CD4-positive, alpha-beta T cell (primary cell): ENCODE measurements at regions of chr1 and their contacts with region 1.

Region 1: GRCh38 chr1:24253569-24253968 is 65.6 kb upstream of the GRHL3 start:
- DNase-seq: no peak
- ATAC-seq: no peak
- H3K4me3 ChIP-seq: no peak overlapping the region
- H3K4me3 Mint-ChIP-seq: no peak overlapping the region
- H3K27ac ChIP-seq: no peak overlapping the region
- H3K27ac Mint-ChIP-seq: no peak overlapping the region
- H3K4me1 ChIP-seq: no peaks in the 10 kb centered on the region
- H3K4me1 Mint-ChIP-seq: no peaks in the 10 kb centered on the region
- H3K27me3 ChIP-seq: no peaks in the 10 kb centered on the region
- H3K27me3 Mint-ChIP-seq: no peaks in the 10 kb centered on the region
- CTCF ChIP-seq: no peak

Region 2: GRCh38 chr1:24048205-24048869 is 205.2 kb before region 1 on chr1:
- CTCF ChIA-PET with region 1: no interaction called
- POLR2A ChIA-PET with region 1: no interaction called
- intact Hi-C with region 1: no loop called
- DNase-seq: no peak
- ATAC-seq: no peak
- H3K4me3 ChIP-seq: no peak overlapping the region
- H3K4me3 Mint-ChIP-seq: no peak overlapping the region
- H3K27ac ChIP-seq: no peak overlapping the region
- H3K27ac Mint-ChIP-seq: no peak overlapping the region
- H3K4me1 ChIP-seq: no peaks in the 10 kb centered on the region
- H3K4me1 Mint-ChIP-seq: no peaks in the 10 kb centered on the region
- H3K27me3 ChIP-seq: no peaks in the 10 kb centered on the region
- H3K27me3 Mint-ChIP-seq: no peaks in the 10 kb centered on the region
- CTCF ChIP-seq: no peak

Region 3: DNA sequence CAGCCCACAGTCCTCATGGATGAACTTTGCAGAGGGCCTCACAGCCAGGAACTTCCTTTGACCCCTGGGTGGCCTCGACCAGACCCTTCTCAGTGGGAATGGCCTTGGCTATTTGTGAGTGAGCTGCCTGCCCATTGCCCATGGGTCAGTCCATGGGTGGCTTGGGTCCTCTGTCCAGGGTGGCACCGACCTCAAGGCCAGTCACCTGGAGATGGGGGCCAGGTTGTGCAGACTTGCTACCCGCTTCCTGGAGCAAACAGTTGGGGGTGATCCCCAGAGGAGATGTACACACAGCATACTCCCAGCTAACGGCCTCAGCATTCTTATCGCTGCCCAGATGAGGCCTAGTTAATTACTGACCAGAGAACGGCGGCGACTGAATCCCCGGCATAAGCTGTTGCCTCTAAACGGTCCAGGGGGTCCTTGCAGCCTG is 43.4 kb before region 1 on chr1:
- CTCF ChIA-PET with region 1: no interaction called
- POLR2A ChIA-PET with region 1: no interaction called
- intact Hi-C with region 1: loop called in 1 of 2 experiments (anchors 2 kb)
- DNase-seq: no peak
- ATAC-seq: no peak
- H3K4me3 ChIP-seq: no peak overlapping the region
- H3K4me3 Mint-ChIP-seq: no peak overlapping the region
- H3K27ac ChIP-seq: no peak overlapping the region
- H3K27ac Mint-ChIP-seq: no peak overlapping the region
- H3K4me1 ChIP-seq: no peaks in the 10 kb centered on the region
- H3K4me1 Mint-ChIP-seq: no peaks in the 10 kb centered on the region
- H3K27me3 ChIP-seq: peaks cover 0 to 8% of the 10 kb centered on the region in 2 experiments
- H3K27me3 Mint-ChIP-seq: peaks cover 4% of the 10 kb centered on the region
- CTCF ChIP-seq: no peak